ENCODE measurements at regions of chr6 and their contacts with region 1.

Region 1: DNA sequence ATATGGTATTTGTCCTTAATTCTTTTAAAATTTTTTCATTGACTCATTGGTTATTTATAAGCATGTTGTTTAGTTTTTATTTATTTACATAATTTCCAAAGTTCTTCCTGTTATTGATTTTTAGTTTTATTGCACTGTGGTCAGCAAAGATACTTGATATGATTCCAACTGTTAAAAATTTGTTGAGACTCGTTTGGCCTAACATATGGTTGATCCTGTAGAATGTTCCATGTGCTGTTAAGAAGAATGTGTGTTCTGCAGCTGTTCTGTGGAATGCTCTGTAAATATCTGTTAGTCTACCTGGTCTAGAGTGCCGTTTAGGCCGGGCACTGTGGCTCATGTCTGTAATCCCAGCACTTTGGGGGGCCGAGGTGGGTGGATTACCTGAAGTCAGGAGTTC is 197.7 kb downstream of the CD109 start:
- DNase-seq: no peak
- H3K4me3 ChIP-seq: no peak overlapping the region
- H3K27ac ChIP-seq: no peak overlapping the region
- H3K4me1 ChIP-seq: no peaks in the 10 kb centered on the region
- CTCF ChIP-seq: no peak

Region 2: DNA sequence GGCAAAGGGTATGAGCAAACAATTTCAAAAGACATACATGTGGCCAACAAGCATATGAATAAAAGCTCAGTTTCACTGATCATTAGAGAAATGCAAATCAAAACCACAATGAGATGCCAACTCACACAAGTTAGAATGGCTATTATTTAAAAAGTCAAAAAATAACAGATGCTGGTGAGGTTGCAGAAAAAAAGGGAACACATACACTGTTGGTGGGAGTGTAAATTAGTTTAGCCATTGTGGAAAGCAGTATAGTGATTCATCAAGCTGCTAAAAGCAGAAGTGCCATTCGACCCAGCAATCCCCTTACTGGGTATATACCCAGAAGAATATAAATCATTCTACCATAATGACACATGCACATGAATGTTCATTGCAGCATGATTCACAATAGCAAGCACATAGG is 661.7 kb before region 1 on chr6:
- CTCF ChIA-PET with region 1: no interaction called
- POLR2A ChIA-PET with region 1: no interaction called
- intact Hi-C with region 1: no loop called
- DNase-seq: no peak
- H3K4me3 ChIP-seq: no peak overlapping the region
- H3K27ac ChIP-seq: no peak overlapping the region
- H3K4me1 ChIP-seq: no peaks in the 10 kb centered on the region
- CTCF ChIP-seq: no peak

Region 3: GRCh38 chr6:73879501-73880293 is 14.0 kb before region 1 on chr6:
- CTCF ChIA-PET with region 1: no interaction called
- POLR2A ChIA-PET with region 1: no interaction called
- intact Hi-C with region 1: loop called (anchors 1 kb)
- DNase-seq: no peak
- H3K4me3 ChIP-seq: no peak overlapping the region
- H3K27ac ChIP-seq: no peak overlapping the region
- H3K4me1 ChIP-seq: no peaks in the 10 kb centered on the region
- CTCF ChIP-seq: no peak

Region 4: DNA sequence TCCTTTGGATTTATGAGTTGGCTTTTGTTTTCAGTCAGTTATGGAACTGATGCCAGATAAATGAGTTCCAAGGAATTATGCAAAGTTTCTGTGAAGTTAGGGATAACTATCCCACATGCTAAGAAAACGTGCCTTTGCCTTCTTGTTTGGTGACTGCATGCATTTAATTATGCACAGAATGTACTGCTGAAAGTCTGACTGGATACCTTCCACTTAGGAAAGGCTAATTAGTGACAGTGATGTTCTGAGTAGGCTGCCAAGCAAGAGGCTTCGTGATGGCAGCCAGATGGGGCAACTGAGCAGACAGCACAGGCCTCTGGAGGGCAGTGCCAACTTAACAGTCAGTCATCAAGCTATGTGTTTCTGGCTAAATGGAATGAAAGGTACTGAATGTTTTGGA is 92.2 kb after region 1 on chr6:
- CTCF ChIA-PET with region 1: no interaction called
- POLR2A ChIA-PET with region 1: no interaction called
- intact Hi-C with region 1: no loop called
- DNase-seq: no peak
- H3K4me3 ChIP-seq: no peak overlapping the region
- H3K27ac ChIP-seq: no peak overlapping the region
- H3K4me1 ChIP-seq: no peaks in the 10 kb centered on the region
- CTCF ChIP-seq: peak; percentile 37